GM12878 (cell line): ENCODE measurements at regions of chr19 and their contacts with region 1.

Region 1: DNA sequence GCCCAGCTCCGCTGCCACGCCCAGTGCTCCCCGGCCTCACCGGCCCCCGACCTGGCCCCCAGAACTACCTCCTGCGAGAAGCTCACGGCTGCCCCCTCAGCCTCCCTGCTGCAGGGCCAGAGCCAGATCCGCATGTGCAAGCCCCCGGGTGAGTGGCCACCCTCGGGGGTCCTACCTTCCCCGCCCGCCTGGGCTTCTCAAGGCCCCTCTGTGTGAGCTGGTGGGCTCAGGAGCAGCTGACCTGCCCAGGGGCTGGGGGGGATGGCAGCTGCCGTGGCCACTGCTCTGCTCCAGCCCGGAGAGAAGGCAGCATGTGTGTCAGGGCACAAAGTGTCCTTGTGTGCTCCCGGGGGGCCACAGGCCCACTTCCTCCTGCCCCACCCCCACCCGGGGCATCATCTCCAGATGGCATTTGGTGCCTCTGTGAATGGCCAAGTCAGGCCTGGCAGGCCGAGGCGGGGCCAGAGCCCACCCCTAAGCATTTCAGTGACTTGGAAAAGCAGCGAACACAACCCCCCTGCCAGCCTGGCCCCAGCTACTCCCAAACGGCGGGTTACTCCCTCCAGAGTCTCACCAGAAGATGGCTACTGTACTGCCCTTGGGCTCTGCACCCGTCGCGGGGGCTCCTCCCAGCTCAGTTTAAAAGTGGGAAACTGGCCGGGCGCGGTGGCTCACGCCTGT is 7.3 kb downstream of the MIDN start:
- DNase-seq: no peak
- ATAC-seq: no peak
- H3K4me3 ChIP-seq: no peak overlapping the region
- H3K27ac ChIP-seq: no peak overlapping the region
- H3K4me1 ChIP-seq: peaks cover 27% of the 10 kb centered on the region
- H3K27me3 ChIP-seq: no peaks in the 10 kb centered on the region
- CTCF ChIP-seq: no peak
- EP300 ChIP-seq: no peak
- POLR2A ChIP-seq: no peak; the same call in 1 of the 2 replicates
- RAD21 ChIP-seq: no peak

Region 2: DNA sequence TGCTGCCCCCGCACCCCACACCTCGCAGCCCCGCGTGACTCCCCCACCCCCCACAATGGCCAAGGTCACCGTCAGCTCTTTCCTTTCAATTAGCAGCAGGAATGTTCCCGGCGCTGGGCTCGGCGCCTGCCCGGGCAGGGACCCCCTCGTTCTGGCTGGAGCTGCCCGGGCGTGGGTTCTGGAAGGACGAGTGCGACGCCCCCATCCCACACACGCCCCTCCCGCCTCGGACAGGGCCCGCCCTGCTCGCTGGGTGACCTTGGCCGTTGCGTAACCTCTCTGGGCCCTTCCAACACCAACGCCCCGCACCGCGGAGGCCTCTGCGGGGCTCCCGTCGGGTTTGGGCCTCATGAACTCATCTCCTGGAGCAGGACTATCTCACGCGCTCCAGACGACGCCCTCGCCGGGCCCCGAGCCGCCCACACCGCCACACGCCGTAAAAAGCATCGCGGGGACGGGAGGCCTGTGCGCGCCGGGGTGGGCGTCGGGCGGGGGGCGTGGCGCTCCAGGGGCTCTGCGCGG is 536.6 kb before region 1 on chr19:
- CTCF ChIA-PET with region 1: no interaction called
- POLR2A ChIA-PET with region 1: no interaction called
- RAD21 ChIA-PET with region 1: no interaction called
- SMC1A ChIA-PET with region 1: no interaction called
- in situ Hi-C with region 1: no loop called
- intact Hi-C with region 1: no loop called
- DNase-seq: no peak
- ATAC-seq: no peak
- H3K4me3 ChIP-seq: no peak overlapping the region
- H3K27ac ChIP-seq: no peak overlapping the region
- H3K4me1 ChIP-seq: no peaks in the 10 kb centered on the region; the same call in 1 of the 2 replicates
- H3K27me3 ChIP-seq: no peaks in the 10 kb centered on the region
- CTCF ChIP-seq: no peak
- EP300 ChIP-seq: no peak
- POLR2A ChIP-seq: no peak
- RAD21 ChIP-seq: no peak

Region 3: DNA sequence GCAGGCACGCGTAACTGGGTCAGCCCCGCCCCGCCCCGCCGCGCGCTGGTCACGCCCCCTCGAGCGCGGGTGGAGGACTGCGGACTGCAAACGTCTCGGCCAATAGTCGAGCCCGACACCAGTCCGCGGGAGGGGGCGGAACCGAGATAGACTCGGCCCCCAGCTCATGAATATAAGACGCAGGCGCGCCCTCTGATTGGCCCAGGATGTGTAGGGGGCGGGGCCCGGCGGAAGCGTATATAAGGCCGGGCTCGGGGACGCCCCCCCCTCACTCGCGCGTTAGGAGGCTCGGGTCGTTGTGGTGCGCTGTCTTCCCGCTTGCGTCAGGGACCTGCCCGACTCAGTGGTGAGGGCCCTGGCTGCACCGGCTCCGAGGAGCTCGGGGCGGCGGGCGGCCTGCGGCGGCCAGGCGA is 13.4 kb after region 1 on chr19 and contains the start of gene CIRBP:
- CTCF ChIA-PET with region 1: interaction called, 26 read pairs
- POLR2A ChIA-PET with region 1: interaction called, 29 read pairs
- RAD21 ChIA-PET with region 1: interaction called, 47 read pairs
- SMC1A ChIA-PET with region 1: interaction called, 14 read pairs
- in situ Hi-C with region 1: no loop called
- intact Hi-C with region 1: loop called (anchors 1 kb)
- DNase-seq: peak; percentile 86
- ATAC-seq: peak; percentile 70
- H3K4me3 ChIP-seq: peak within 1 kb of the TSS; percentile 98
- H3K27ac ChIP-seq: peak within 1 kb of the TSS; percentile 98
- H3K4me1 ChIP-seq: peaks cover 47% of the 10 kb centered on the region
- H3K27me3 ChIP-seq: no peaks in the 10 kb centered on the region
- CTCF ChIP-seq: no peak
- EP300 ChIP-seq: no peak
- POLR2A ChIP-seq: no peak
- RAD21 ChIP-seq: no peak
- polyA plus RNA-seq, gene CIRBP: 27.6 to 52.4 TPM